H1 (cell line): ENCODE measurements at regions of chr19 and their contacts with region 1.

Region 1: DNA sequence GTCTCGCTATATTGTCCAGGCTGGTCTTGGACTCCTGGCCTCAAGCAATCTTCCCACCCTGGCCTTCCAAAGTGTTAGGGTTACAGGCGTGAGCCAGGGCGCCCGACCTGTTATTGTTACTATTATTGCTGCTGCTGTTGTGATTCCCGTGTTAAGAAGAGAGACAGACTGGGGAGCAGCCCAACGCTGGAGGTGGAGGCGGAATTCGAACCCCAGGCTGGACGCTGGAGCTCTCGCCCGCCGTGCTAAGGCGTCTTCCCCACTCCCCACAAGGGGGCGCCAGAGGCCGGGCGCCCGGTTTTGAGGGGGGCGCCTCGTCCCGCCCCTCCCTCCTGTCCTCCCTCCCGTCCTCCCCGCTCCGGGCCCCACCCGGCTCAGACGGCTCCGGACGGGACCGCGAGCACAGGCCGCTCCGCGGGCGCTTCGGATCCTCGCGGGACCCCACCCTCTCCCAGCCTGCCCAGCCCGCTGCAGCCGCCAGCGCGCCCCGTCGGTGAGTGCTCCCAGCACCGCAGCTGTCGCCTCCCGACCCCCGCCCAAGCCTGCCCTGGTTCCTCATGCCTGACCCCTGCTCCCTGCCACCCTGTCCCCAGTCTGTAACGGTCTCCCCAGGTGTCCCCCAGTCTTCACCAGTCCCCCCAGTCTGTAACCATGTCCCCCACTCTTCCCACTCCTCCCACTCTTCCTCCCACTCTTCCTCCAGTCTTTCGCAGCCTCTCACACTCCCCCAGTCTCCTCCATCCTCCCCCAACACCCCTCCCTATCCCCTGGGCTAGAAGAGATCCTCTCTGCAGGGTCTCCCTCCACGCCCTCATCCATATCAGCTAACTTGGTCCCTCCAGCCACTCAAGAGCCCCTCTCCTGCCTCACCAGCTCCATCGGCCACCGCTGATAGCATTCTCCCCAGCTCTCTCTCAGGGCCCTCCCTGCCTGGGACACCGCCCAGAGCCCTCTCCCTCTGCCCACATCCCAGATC is at the start of gene EHD2:
- DNase-seq: peak in 1 of 2 experiments; percentile 89
- H3K4me3 ChIP-seq: peak within 1 kb of the TSS; percentile 47 to 66 (median 56)
- H3K27ac ChIP-seq: no peak within 1 kb of the TSS
- H3K4me1 ChIP-seq: no peaks in the 10 kb centered on the region
- H3K27me3 ChIP-seq: no peaks in the 10 kb centered on the region
- CTCF ChIP-seq: peak; percentile 74 to 84 (median 81)
- EP300 ChIP-seq: no peak
- POLR2A ChIP-seq: no peak
- RAD21 ChIP-seq: peak; percentile 77 to 81
- total RNA-seq, gene EHD2: 13.0 and 14.3 TPM in 2 replicates

Region 2: GRCh38 chr19:47765523-47766358 is 52.4 kb after region 1 on chr19:
- CTCF ChIA-PET with region 1: interaction called, 31 read pairs
- POLR2A ChIA-PET with region 1: interaction called, 3 read pairs
- DNase-seq: peak in 1 of 2 experiments; percentile 93
- H3K4me3 ChIP-seq: no peak overlapping the region
- H3K27ac ChIP-seq: no peak overlapping the region; the same call in 1 of the 2 replicates
- H3K4me1 ChIP-seq: peaks cover 0 to 6% (median 3%) of the 10 kb centered on the region in 4 experiments; a peak in 5 of 7 replicates
- H3K27me3 ChIP-seq: no peaks in the 10 kb centered on the region
- CTCF ChIP-seq: peak; percentile 85 to 95 (median 94)
- EP300 ChIP-seq: no peak
- POLR2A ChIP-seq: no peak
- RAD21 ChIP-seq: peak; percentile 91 to 93